ENCODE measurements at regions of chr11 and their contacts with region 1.

Region 1: DNA sequence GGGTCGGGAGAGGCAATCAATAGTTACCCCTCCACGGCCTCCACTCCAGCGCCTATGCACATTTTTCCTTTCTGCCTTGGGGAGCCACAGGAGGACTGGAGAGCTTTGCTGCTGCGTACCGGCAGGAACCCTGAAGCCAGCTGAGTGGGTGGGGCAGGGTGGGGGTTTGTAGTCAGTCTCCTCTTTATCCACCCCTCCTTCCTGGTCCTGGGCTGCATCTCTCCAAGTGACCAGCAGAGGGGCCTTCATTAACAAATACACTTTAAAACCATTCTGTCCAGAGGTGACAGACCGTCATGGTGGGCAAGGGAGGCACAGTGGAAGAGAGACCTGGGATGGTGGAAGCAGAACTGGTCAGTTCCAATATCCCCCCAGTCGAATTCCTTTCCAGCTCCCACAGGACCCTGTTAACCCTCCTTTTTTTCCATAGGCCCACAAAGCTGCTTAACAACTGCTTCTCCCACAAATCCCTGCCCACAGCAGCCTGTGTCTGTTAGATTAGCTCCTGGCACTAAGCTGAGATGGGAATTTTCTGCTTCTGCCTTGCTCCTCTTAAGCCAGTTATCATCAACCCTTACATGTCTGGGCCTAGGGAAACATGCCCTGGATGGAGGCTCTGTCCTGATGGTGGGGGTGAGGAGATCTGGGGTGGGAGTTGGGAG is 3.9 kb upstream of the ABCG4 start:
- DNase-seq: peak; percentile 43
- H3K4me3 Mint-ChIP-seq: no peak overlapping the region
- H3K27ac Mint-ChIP-seq: no peak overlapping the region
- H3K4me1 Mint-ChIP-seq: peaks cover 5% of the 10 kb centered on the region
- H3K27me3 Mint-ChIP-seq: peaks cover 38% of the 10 kb centered on the region

Region 2: DNA sequence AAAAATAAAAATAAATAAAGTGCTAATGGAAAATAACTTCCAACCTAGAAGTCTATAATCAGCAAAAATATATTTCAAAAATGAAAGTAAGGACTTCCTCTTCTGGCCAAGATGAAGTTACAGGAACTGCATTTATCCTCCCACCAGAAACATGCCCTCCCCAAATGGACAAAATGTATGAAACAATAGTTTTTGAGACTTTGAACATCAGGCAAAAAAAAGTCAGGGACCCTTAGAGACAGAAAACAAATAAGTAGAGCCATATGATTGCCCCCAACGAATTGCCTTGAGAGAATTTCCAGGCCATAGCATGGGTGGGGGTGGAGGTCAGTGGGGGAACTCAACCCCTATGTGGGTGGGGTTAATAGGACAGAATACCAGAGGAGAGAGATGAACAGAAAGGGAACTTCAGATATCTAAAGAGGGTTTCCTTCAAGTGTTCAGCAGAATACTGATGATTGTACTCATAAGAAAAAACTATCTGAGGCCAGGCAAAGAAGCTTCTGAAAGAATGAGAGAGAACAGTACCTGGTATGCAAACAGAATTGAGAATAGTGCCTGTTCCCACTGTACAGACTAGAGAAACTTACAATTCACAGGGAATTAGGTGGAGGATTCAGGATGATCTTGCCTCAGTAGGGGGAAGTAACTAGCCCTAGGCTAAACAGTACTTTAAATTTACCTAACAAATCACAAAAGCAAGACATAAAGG is 1185.4 kb before region 1 on chr11:
- CTCF ChIA-PET with region 1: no interaction called
- intact Hi-C with region 1: no loop called
- DNase-seq: no peak
- H3K4me3 Mint-ChIP-seq: no peak overlapping the region
- H3K27ac Mint-ChIP-seq: no peak overlapping the region
- H3K4me1 Mint-ChIP-seq: peaks cover 26% of the 10 kb centered on the region
- H3K27me3 Mint-ChIP-seq: no peaks in the 10 kb centered on the region

Region 3: DNA sequence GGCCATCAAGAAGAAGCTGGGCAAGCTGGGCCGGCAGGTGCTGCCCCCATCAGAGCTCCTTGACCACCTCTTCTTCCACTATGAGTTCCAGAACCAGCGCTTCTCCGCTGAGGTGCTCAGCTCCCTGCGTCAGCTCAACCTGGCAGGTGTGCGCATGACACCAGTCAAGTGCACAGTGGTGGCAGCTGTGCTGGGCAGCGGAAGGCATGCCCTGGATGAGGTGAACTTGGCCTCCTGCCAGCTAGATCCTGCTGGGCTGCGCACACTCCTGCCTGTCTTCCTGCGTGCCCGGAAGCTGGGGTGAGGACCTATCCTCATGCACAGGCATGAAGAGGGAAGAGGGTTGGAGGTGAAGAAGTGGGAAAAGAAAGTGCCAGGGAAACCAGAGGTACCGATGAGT is 35.0 kb after region 1 on chr11:
- CTCF ChIA-PET with region 1: no interaction called
- intact Hi-C with region 1: loop called (anchors 1 kb)
- DNase-seq: no peak
- H3K4me3 Mint-ChIP-seq: no peak overlapping the region
- H3K27ac Mint-ChIP-seq: no peak overlapping the region
- H3K4me1 Mint-ChIP-seq: peaks cover 23% of the 10 kb centered on the region
- H3K27me3 Mint-ChIP-seq: no peaks in the 10 kb centered on the region

Region 4: GRCh38 chr11:119196833-119197483 is 52.0 kb after region 1 on chr11:
- CTCF ChIA-PET with region 1: interaction called, 3 read pairs
- intact Hi-C with region 1: loop called (anchors 5 kb)
- DNase-seq: peak; percentile 88
- H3K4me3 Mint-ChIP-seq: no peak overlapping the region
- H3K27ac Mint-ChIP-seq: no peak overlapping the region
- H3K4me1 Mint-ChIP-seq: no peaks in the 10 kb centered on the region
- H3K27me3 Mint-ChIP-seq: no peaks in the 10 kb centered on the region